ENCODE measurements at regions of chr1 and their contacts with region 1.

Region 1: GRCh38 chr1:94463765-94464330 is 45.7 kb downstream of the ABCD3 start:
- DNase-seq: peak in 4 of 5 donors; percentile 16 to 28 (median 20)
- H3K4me3 ChIP-seq: no peak overlapping the region
- H3K4me3 Mint-ChIP-seq: no peak overlapping the region
- H3K27ac ChIP-seq: no peak overlapping the region
- H3K27ac Mint-ChIP-seq: peak overlapping the region in 3 of 7 donors; percentile 20 to 65 (median 48)
- H3K4me1 ChIP-seq: no peaks in the 10 kb centered on the region
- H3K4me1 Mint-ChIP-seq: peaks cover 0 to 6% (median 0%) of the 10 kb centered on the region in 4 donors
- H3K27me3 ChIP-seq: no peaks in the 10 kb centered on the region
- H3K27me3 Mint-ChIP-seq: no peaks in the 10 kb centered on the region

Region 2: GRCh38 chr1:94025383-94026340 is 438.2 kb before region 1 on chr1:
- CTCF ChIA-PET with region 1: interaction called, 11 read pairs
- POLR2A ChIA-PET with region 1: no interaction called
- intact Hi-C with region 1: loop called (anchors 1 kb)
- DNase-seq: peak in 1 of 5 donors; percentile 11
- H3K4me3 ChIP-seq: no peak overlapping the region
- H3K4me3 Mint-ChIP-seq: no peak overlapping the region
- H3K27ac ChIP-seq: no peak overlapping the region
- H3K27ac Mint-ChIP-seq: no peak overlapping the region
- H3K4me1 ChIP-seq: no peaks in the 10 kb centered on the region
- H3K4me1 Mint-ChIP-seq: no peaks in the 10 kb centered on the region
- H3K27me3 ChIP-seq: no peaks in the 10 kb centered on the region
- H3K27me3 Mint-ChIP-seq: peaks cover 2 to 6% of the 10 kb centered on the region in 2 donors

Region 3: GRCh38 chr1:94039514-94039870 is 424.4 kb before region 1 on chr1:
- CTCF ChIA-PET with region 1: interaction called, 29 read pairs
- POLR2A ChIA-PET with region 1: no interaction called
- intact Hi-C with region 1: no loop called
- DNase-seq: peak in 4 of 5 donors; percentile 22 to 37 (median 25)
- H3K4me3 ChIP-seq: no peak overlapping the region
- H3K4me3 Mint-ChIP-seq: no peak overlapping the region
- H3K27ac ChIP-seq: no peak overlapping the region
- H3K27ac Mint-ChIP-seq: no peak overlapping the region
- H3K4me1 ChIP-seq: no peaks in the 10 kb centered on the region
- H3K4me1 Mint-ChIP-seq: peaks cover 0 to 2% (median 0%) of the 10 kb centered on the region in 4 donors
- H3K27me3 ChIP-seq: no peaks in the 10 kb centered on the region
- H3K27me3 Mint-ChIP-seq: peaks cover 17 to 34% of the 10 kb centered on the region in 2 donors

Region 4: GRCh38 chr1:94045465-94046056 is 418.3 kb before region 1 on chr1:
- CTCF ChIA-PET with region 1: interaction called, 29 read pairs
- POLR2A ChIA-PET with region 1: no interaction called
- intact Hi-C with region 1: no loop called
- DNase-seq: peak in 1 of 5 donors; percentile 23
- H3K4me3 ChIP-seq: no peak overlapping the region
- H3K4me3 Mint-ChIP-seq: peak overlapping the region in 7 of 8 donors; percentile 7 to 62 (median 47)
- H3K27ac ChIP-seq: no peak overlapping the region
- H3K27ac Mint-ChIP-seq: no peak overlapping the region
- H3K4me1 ChIP-seq: no peaks in the 10 kb centered on the region
- H3K4me1 Mint-ChIP-seq: peaks cover 0 to 6% (median 0%) of the 10 kb centered on the region in 4 donors
- H3K27me3 ChIP-seq: no peaks in the 10 kb centered on the region
- H3K27me3 Mint-ChIP-seq: peaks cover 10 to 16% of the 10 kb centered on the region in 2 donors

Region 5: GRCh38 chr1:94061513-94062443 is 402.1 kb before region 1 on chr1:
- CTCF ChIA-PET with region 1: interaction called, 30 read pairs
- POLR2A ChIA-PET with region 1: no interaction called
- intact Hi-C with region 1: loop called (anchors 1 kb)
- DNase-seq: peak in 1 of 5 donors; percentile 8
- H3K4me3 ChIP-seq: no peak overlapping the region
- H3K4me3 Mint-ChIP-seq: no peak overlapping the region
- H3K27ac ChIP-seq: no peak overlapping the region
- H3K27ac Mint-ChIP-seq: no peak overlapping the region
- H3K4me1 ChIP-seq: no peaks in the 10 kb centered on the region
- H3K4me1 Mint-ChIP-seq: no peaks in the 10 kb centered on the region
- H3K27me3 ChIP-seq: no peaks in the 10 kb centered on the region
- H3K27me3 Mint-ChIP-seq: peaks cover 15 to 17% of the 10 kb centered on the region in 2 donors

Region 6: GRCh38 chr1:94362466-94363058 is 101.3 kb before region 1 on chr1:
- CTCF ChIA-PET with region 1: no interaction called
- POLR2A ChIA-PET with region 1: no interaction called
- intact Hi-C with region 1: no loop called
- DNase-seq: no peak
- H3K4me3 ChIP-seq: no peak overlapping the region
- H3K4me3 Mint-ChIP-seq: no peak overlapping the region
- H3K27ac ChIP-seq: no peak overlapping the region
- H3K27ac Mint-ChIP-seq: no peak overlapping the region
- H3K4me1 ChIP-seq: no peaks in the 10 kb centered on the region
- H3K4me1 Mint-ChIP-seq: no peaks in the 10 kb centered on the region
- H3K27me3 ChIP-seq: no peaks in the 10 kb centered on the region
- H3K27me3 Mint-ChIP-seq: peaks cover 6 to 9% of the 10 kb centered on the region in 2 donors

Region 7: GRCh38 chr1:94481473-94481933 is 17.7 kb after region 1 on chr1:
- CTCF ChIA-PET with region 1: interaction called, 19 read pairs
- POLR2A ChIA-PET with region 1: no interaction called
- intact Hi-C with region 1: no loop called
- DNase-seq: peak; percentile 36 to 48 (median 44)
- H3K4me3 ChIP-seq: no peak overlapping the region
- H3K4me3 Mint-ChIP-seq: no peak overlapping the region
- H3K27ac ChIP-seq: no peak overlapping the region
- H3K27ac Mint-ChIP-seq: no peak overlapping the region
- H3K4me1 ChIP-seq: no peaks in the 10 kb centered on the region
- H3K4me1 Mint-ChIP-seq: peaks cover 0 to 3% (median 0%) of the 10 kb centered on the region in 4 donors
- H3K27me3 ChIP-seq: no peaks in the 10 kb centered on the region
- H3K27me3 Mint-ChIP-seq: no peaks in the 10 kb centered on the region

Measured in CD4-positive, alpha-beta memory T cell (primary cell).